Breast epithelium (tissue), 4 donors: ENCODE measurements at regions of chr9 and their contacts with region 1.

Region 1: DNA sequence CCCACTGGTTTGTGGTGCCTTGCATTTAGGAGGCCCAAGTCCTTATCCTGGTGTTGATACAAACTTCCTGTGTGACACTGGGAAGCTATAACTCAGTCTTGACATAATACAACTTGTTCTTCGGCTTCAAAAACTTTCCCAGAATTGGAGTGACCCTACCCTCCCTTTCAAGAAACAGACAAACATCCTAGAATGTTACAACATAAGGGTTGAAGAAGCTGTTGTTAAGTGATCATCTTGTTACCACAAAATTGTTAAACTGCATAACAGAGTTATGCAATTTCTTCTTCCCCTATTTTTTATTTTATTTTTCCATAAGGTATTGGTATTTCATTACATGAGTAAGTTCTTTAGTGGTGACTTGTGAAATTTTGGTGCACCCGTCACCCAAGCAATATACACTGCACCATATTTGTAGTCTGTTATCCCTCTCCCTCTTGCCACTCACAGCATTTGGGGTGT is 21.3 kb downstream of the TLR4 start:
- DNase-seq: no peak
- H3K4me3 ChIP-seq: no peak overlapping the region
- H3K27ac ChIP-seq: peak overlapping the region in 1 of 2 donors; percentile 29
- H3K4me1 ChIP-seq: no peaks in the 10 kb centered on the region
- H3K27me3 ChIP-seq: no peaks in the 10 kb centered on the region
- CTCF ChIP-seq: no peak
- POLR2A ChIP-seq: no peak

Region 2: DNA sequence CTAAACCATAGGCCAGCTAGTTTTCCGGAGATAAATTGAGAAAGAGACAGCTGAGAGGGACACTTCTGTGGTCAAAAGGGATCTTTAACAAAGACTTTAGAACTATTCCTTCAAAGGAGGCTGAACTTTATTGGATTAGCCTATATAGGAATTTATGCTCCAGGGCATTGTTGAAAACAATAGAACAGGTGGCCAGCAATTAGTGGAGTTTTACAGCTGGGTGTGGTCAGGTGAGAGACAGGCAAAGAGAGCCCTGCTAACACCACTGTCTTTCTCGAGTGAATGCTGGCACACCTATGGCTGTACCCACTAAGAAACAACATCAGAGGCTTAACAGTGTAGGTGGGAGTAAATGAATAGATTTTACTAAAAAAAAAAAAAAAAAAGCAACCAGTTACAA is 37.9 kb before region 1 on chr9:
- intact Hi-C with region 1: loop called (anchors 2 kb)
- DNase-seq: no peak
- H3K4me3 ChIP-seq: no peak overlapping the region
- H3K27ac ChIP-seq: no peak overlapping the region
- H3K4me1 ChIP-seq: no peaks in the 10 kb centered on the region
- H3K27me3 ChIP-seq: no peaks in the 10 kb centered on the region
- CTCF ChIP-seq: no peak
- POLR2A ChIP-seq: no peak

Region 3: GRCh38 chr9:117704024-117704575 is 21.4 kb before region 1 on chr9 and contains the start of gene TLR4:
- intact Hi-C with region 1: loop called (anchors 2 kb)
- DNase-seq: peak in 1 of 2 donors; percentile 35
- H3K4me3 ChIP-seq: peak within 1 kb of the TSS; percentile 43 to 69 (median 52)
- H3K27ac ChIP-seq: peak within 1 kb of the TSS; percentile 81 to 92
- H3K4me1 ChIP-seq: peaks cover 0 to 3% of the 10 kb centered on the region in 2 donors
- H3K27me3 ChIP-seq: no peaks in the 10 kb centered on the region
- CTCF ChIP-seq: no peak
- POLR2A ChIP-seq: no peak
- total RNA-seq, gene TLR4: 23.0 to 71.2 (median 31.1) TPM